Calu3 (cell line): ENCODE measurements at regions of chr6 and their contacts with region 1.

Region 1: GRCh38 chr6:31068669-31069340 is 43.6 kb downstream of the C6orf15 start:
- DNase-seq: peak; percentile 94
- H3K4me3 Mint-ChIP-seq: no peak overlapping the region
- H3K27ac Mint-ChIP-seq: no peak overlapping the region
- H3K4me1 Mint-ChIP-seq: no peaks in the 10 kb centered on the region
- H3K27me3 Mint-ChIP-seq: peaks cover 5% of the 10 kb centered on the region
- CTCF ChIP-seq: peak; percentile 99

Region 2: DNA sequence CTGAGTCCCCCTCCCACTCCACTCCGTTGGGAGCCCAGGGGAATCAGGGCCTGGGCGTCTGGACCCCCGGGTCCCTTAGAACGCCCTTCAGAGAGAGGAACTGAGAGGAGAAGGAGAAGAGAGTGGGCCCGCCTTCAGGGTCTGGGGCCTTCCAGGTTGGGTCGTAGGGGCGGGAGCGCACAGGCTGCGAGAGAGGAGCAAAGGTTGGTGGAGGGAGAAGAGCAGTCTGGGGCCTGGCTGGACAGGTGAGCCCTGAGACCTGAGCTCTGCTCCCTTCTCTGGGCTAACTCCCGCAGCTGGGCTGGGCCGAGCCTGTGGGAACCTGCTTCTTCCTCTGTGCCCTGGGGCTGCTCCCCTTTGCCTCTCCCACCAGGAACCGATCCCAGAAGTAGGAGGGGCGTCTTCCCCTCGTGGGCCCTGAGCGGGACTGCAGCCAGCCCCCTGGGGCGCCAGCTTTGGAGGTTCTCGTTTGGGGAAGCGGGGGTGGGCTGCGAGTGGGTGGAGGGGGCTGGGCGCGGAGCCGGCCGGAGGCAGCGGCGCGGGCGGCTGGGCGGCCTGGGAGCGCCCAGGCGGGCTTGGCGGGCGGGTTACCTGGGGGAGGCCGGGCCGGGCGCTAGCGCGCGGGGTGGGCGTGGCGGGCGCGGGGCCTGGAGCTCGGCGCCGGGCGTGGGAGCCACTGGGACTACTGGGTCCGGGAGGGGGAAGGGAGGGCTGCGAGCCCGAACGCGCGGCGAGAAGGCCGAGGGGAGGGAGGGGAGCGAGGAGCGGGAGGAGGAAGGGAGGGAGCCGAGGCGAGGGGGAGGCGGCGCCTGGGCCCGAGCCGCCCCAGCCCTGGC is 184.9 kb before region 1 on chr6 and contains the start of gene DDR1:
- CTCF ChIA-PET with region 1: interaction called, 23 read pairs
- intact Hi-C with region 1: no loop called
- DNase-seq: peak; percentile 82
- H3K4me3 Mint-ChIP-seq: peak within 1 kb of the TSS; percentile 89
- H3K27ac Mint-ChIP-seq: peak within 1 kb of the TSS; percentile 94
- H3K4me1 Mint-ChIP-seq: peaks cover 63% of the 10 kb centered on the region
- H3K27me3 Mint-ChIP-seq: peaks cover 16% of the 10 kb centered on the region
- CTCF ChIP-seq: no peak
- total RNA-seq, gene DDR1: 489 and 580 TPM in 2 replicates

Region 3: DNA sequence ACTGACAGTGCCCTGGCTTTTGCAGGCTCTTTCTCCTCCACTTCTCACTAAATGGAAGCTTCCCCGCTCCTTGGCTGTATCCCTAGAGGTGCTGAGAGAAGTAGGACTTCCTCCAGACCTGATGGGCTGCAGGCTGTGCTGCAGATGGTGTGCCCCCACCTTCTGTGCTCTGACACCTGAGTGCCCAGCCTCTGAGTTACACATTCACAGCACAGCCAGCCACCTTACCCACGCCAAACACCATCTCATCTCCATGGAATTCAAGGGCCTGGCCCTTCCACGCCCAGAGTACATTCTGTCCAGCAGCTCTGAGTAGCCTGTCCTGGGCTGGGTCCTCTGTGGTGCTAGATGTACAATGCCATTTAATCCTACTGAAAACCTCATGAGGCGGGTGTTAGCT is 142.2 kb before region 1 on chr6:
- CTCF ChIA-PET with region 1: interaction called, 11 read pairs
- intact Hi-C with region 1: no loop called
- DNase-seq: peak; percentile 74
- H3K4me3 Mint-ChIP-seq: peak overlapping the region; percentile 23
- H3K27ac Mint-ChIP-seq: peak overlapping the region; percentile 81
- H3K4me1 Mint-ChIP-seq: peaks cover 39% of the 10 kb centered on the region
- H3K27me3 Mint-ChIP-seq: no peaks in the 10 kb centered on the region
- CTCF ChIP-seq: no peak

Region 4: GRCh38 chr6:30981942-30982772 is 86.6 kb before region 1 on chr6:
- CTCF ChIA-PET with region 1: interaction called, 12 read pairs
- intact Hi-C with region 1: no loop called
- DNase-seq: peak; percentile 58
- H3K4me3 Mint-ChIP-seq: peak overlapping the region; percentile 7
- H3K27ac Mint-ChIP-seq: peak overlapping the region; percentile 48
- H3K4me1 Mint-ChIP-seq: peaks cover 29% of the 10 kb centered on the region
- H3K27me3 Mint-ChIP-seq: peaks cover 13% of the 10 kb centered on the region
- CTCF ChIP-seq: no peak

Region 5: GRCh38 chr6:31042806-31043205 is 26.0 kb before region 1 on chr6:
- CTCF ChIA-PET with region 1: interaction called, 23 read pairs
- intact Hi-C with region 1: no loop called
- DNase-seq: peak; percentile 82
- H3K4me3 Mint-ChIP-seq: no peak overlapping the region
- H3K27ac Mint-ChIP-seq: peak overlapping the region; percentile 14
- H3K4me1 Mint-ChIP-seq: peaks cover 31% of the 10 kb centered on the region
- H3K27me3 Mint-ChIP-seq: peaks cover 12% of the 10 kb centered on the region
- CTCF ChIP-seq: peak; percentile 85

Region 6: GRCh38 chr6:31079656-31080261 is 11.0 kb after region 1 on chr6:
- CTCF ChIA-PET with region 1: interaction called, 44 read pairs
- intact Hi-C with region 1: no loop called
- DNase-seq: peak; percentile 89
- H3K4me3 Mint-ChIP-seq: no peak overlapping the region
- H3K27ac Mint-ChIP-seq: no peak overlapping the region
- H3K4me1 Mint-ChIP-seq: peaks cover 8% of the 10 kb centered on the region
- H3K27me3 Mint-ChIP-seq: no peaks in the 10 kb centered on the region
- CTCF ChIP-seq: peak; percentile 89

Region 7: DNA sequence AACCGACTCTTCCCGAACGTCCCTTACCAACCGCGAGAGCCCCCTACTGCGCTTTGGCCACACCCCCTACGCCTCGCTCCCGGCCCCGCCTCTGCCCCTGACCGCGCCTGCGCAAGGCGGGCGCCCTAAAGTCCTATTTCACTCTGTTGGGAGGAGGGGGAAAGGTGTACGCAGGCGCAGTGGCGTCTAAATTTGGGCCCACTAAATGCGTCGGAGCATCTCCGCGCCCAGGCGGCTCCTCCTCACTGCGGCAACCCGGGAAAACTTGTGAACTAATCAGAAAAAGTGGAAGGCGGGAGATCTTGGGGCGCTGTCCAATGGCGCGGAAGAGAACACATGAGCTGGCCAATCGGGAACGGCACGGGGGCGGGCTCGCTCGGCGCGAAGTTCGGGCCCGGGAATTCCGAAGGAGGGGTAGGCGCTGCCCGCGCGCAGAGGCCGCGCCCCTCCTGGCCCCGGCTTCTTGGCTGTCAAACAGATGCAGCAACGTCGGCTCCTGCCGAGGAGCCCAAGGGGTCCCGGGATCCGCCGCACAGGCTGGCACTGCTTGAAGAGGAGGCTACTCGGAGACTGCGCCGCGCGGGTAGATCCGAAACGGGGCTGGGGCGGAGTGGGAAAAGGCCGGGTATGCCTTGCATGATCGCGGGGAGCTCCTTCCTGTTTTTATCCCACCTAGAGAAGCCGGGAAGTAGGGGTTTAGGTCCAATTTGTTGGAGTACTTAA is 89.5 kb after region 1 on chr6 and contains the start of gene TCF19:
- CTCF ChIA-PET with region 1: no interaction called
- intact Hi-C with region 1: no loop called
- DNase-seq: peak; percentile 100
- H3K4me3 Mint-ChIP-seq: peak within 1 kb of the TSS; percentile 99
- H3K27ac Mint-ChIP-seq: peak within 1 kb of the TSS; percentile 91
- H3K4me1 Mint-ChIP-seq: peaks cover 53% of the 10 kb centered on the region
- H3K27me3 Mint-ChIP-seq: no peaks in the 10 kb centered on the region
- CTCF ChIP-seq: no peak
- total RNA-seq, gene TCF19: 43.2 and 49.5 TPM in 2 replicates